Activated CD4-positive, alpha-beta T cell treated with anti-CD3 and anti-CD28 coated beads for 36 hours (primary cell): ENCODE measurements at regions of chr7 and their contacts with region 1.

Region 1: GRCh38 chr7:149310113-149310836 is 48.3 kb downstream of the ZNF783 start:
- DNase-seq: no peak
- ATAC-seq: peak; percentile 66
- H3K4me3 Mint-ChIP-seq: no peak overlapping the region
- H3K27ac Mint-ChIP-seq: no peak overlapping the region
- H3K4me1 Mint-ChIP-seq: peaks cover 6% of the 10 kb centered on the region
- H3K27me3 Mint-ChIP-seq: no peaks in the 10 kb centered on the region

Region 2: DNA sequence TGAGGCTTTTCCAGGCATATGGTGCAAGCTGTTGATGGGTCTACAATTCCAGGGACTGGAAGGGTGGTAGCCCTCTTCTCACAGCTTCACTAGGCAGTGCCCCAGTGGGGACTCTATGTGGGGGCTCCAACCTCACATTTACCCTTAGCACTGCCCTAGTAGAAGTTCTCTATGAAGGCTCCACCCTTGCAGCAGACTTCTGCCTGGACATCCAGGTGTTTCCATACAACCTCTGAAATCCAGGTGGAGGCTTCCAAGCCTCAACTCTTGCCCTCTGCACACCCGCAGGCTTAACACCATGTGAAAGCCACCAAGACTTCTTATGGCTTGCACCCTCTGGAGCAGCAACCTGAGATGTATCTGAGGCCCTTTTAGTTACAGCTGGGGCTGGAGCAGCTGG is 62.8 kb after region 1 on chr7:
- CTCF ChIA-PET with region 1: no interaction called
- POLR2A ChIA-PET with region 1: interaction called, 12 read pairs
- intact Hi-C with region 1: no loop called
- DNase-seq: no peak
- ATAC-seq: no peak
- H3K4me3 Mint-ChIP-seq: no peak overlapping the region
- H3K27ac Mint-ChIP-seq: no peak overlapping the region
- H3K4me1 Mint-ChIP-seq: no peaks in the 10 kb centered on the region
- H3K27me3 Mint-ChIP-seq: peaks cover 10% of the 10 kb centered on the region